Kidney (tissue), 22 donors: ENCODE measurements at regions of chr7 and their contacts with region 1.

Region 1: GRCh38 chr7:155344600-155345433 is 47.1 kb downstream of the INSIG1 start:
- DNase-seq: peak; percentile 85 to 89 (median 88)
- H3K4me3 ChIP-seq: peak overlapping the region in 1 of 3 donors; percentile 28
- H3K27ac ChIP-seq: no peak overlapping the region
- H3K4me1 ChIP-seq: peaks cover 0 to 5% (median 0%) of the 10 kb centered on the region in 3 donors
- H3K27me3 ChIP-seq: no peaks in the 10 kb centered on the region
- CTCF ChIP-seq: peak; percentile 89

Region 2: GRCh38 chr7:155053002-155053401 is 291.8 kb before region 1 on chr7:
- intact Hi-C with region 1: no loop called
- DNase-seq: no peak
- H3K4me3 ChIP-seq: no peak overlapping the region
- H3K27ac ChIP-seq: no peak overlapping the region
- H3K4me1 ChIP-seq: no peaks in the 10 kb centered on the region
- H3K27me3 ChIP-seq: no peaks in the 10 kb centered on the region
- CTCF ChIP-seq: no peak

Region 3: GRCh38 chr7:155145477-155146255 is 199.2 kb before region 1 on chr7:
- intact Hi-C with region 1: no loop called
- DNase-seq: no peak
- H3K4me3 ChIP-seq: no peak overlapping the region
- H3K27ac ChIP-seq: no peak overlapping the region
- H3K4me1 ChIP-seq: no peaks in the 10 kb centered on the region
- H3K27me3 ChIP-seq: no peaks in the 10 kb centered on the region
- CTCF ChIP-seq: no peak

Region 4: GRCh38 chr7:155188821-155189581 is 155.8 kb before region 1 on chr7:
- intact Hi-C with region 1: loop called (anchors 5 kb)
- DNase-seq: no peak
- H3K4me3 ChIP-seq: no peak overlapping the region
- H3K27ac ChIP-seq: no peak overlapping the region
- H3K4me1 ChIP-seq: no peaks in the 10 kb centered on the region
- H3K27me3 ChIP-seq: no peaks in the 10 kb centered on the region
- CTCF ChIP-seq: no peak

Region 5: GRCh38 chr7:155769701-155770100 is 424.9 kb after region 1 on chr7:
- intact Hi-C with region 1: no loop called
- DNase-seq: peak in 2 of 5 donors; percentile 23 to 62
- H3K4me3 ChIP-seq: no peak overlapping the region
- H3K27ac ChIP-seq: no peak overlapping the region
- H3K4me1 ChIP-seq: no peaks in the 10 kb centered on the region
- H3K27me3 ChIP-seq: no peaks in the 10 kb centered on the region
- CTCF ChIP-seq: no peak